PC-9 (cell line): ENCODE measurements at regions of chr5 and their contacts with region 1.

Region 1: GRCh38 chr5:88226881-88227450 is 41.7 kb downstream of the TMEM161B start:
- DNase-seq: no peak
- H3K4me3 ChIP-seq: no peak overlapping the region
- H3K27ac ChIP-seq: no peak overlapping the region
- H3K4me1 ChIP-seq: no peaks in the 10 kb centered on the region
- H3K27me3 ChIP-seq: no peaks in the 10 kb centered on the region
- CTCF ChIP-seq: no peak

Region 2: DNA sequence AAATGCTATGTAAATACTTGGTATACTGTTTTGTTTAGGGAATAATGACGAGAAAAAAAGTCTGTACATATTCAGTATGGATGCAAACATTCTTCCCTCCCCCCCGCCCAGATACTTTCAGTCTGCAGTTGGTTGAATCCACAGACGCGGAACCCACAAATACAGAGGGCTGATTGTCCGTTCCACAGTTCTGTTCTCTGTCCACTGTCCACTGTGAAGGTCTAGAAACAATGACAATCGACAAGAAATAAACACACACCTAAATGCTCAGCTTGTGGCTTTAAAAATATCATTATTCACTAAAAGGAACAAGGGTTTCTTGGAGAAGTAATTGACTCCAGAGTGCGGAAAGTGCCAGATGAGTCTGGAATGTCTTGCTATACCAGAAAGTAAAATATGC is 67.4 kb before region 1 on chr5:
- CTCF ChIA-PET with region 1: no interaction called
- POLR2A ChIA-PET with region 1: no interaction called
- intact Hi-C with region 1: loop called (anchors 2 kb)
- DNase-seq: no peak
- H3K4me3 ChIP-seq: no peak overlapping the region
- H3K27ac ChIP-seq: no peak overlapping the region
- H3K4me1 ChIP-seq: no peaks in the 10 kb centered on the region
- H3K27me3 ChIP-seq: no peaks in the 10 kb centered on the region
- CTCF ChIP-seq: no peak